Transverse colon (tissue), 4 donors: ENCODE measurements at regions of chr11 and their contacts with region 1.

Region 1: DNA sequence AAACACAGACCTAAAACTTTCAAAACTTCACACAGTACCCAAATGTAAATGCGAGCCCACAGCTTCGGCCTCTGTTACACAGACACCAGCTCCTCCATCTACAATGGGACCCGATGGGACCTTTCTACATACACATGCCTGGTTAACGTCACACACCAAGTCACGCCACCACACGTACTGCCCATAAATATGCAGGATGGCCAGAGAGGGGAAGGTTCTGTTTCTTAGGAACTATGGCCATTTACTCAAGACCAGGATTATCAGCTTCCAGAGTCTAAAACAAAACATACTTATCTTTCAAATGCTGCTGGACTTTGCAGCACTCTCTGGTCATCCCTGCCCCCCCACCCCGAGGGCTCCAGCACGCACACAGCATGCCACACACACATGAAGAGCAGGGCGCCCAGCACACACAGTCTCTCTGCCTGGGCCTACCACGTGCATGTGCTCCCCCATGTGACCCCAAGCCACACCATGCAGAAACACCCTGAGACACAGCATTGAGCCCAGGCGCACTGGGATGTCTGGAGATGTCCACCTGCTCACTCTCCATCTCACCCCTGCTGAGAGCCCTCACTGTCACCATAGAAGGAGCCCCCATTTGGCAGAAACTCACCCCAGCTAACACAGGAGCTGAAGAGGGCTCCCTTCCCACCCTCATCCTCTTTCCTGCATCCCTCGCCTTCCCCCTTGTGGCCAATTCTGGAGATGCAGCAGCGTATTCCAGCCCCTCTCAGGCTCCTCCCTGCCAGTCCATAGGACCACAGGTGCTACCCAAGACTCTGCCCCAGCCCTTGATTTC is 61.8 kb downstream of the SLC22A12 start:
- DNase-seq: peak; percentile 82
- H3K4me3 ChIP-seq: no peak overlapping the region
- H3K27ac ChIP-seq: no peak overlapping the region
- H3K4me1 ChIP-seq: peaks cover 0 to 3% (median 0%) of the 10 kb centered on the region in 4 donors
- H3K27me3 ChIP-seq: no peaks in the 10 kb centered on the region
- CTCF ChIP-seq: peak; percentile 86 to 95 (median 94)
- EP300 ChIP-seq: no peak
- POLR2A ChIP-seq: no peak

Region 2: GRCh38 chr11:64545605-64546004 is 107.2 kb before region 1 on chr11:
- in situ Hi-C with region 1: loop called in 1 of 4 experiments (anchors 10 kb)
- intact Hi-C with region 1: no loop called
- DNase-seq: no peak
- H3K4me3 ChIP-seq: no peak overlapping the region
- H3K27ac ChIP-seq: no peak overlapping the region
- H3K4me1 ChIP-seq: peaks cover 0 to 5% (median 0%) of the 10 kb centered on the region in 4 donors
- H3K27me3 ChIP-seq: no peaks in the 10 kb centered on the region
- CTCF ChIP-seq: no peak
- EP300 ChIP-seq: no peak
- POLR2A ChIP-seq: no peak

Region 3: GRCh38 chr11:64553551-64554201 is 99.1 kb before region 1 on chr11:
- in situ Hi-C with region 1: loop called in 1 of 4 experiments (anchors 10 kb)
- intact Hi-C with region 1: loop called (anchors 1 kb)
- DNase-seq: peak; percentile 59
- H3K4me3 ChIP-seq: no peak overlapping the region
- H3K27ac ChIP-seq: peak overlapping the region; percentile 31 to 72 (median 60)
- H3K4me1 ChIP-seq: peaks cover 7 to 24% (median 22%) of the 10 kb centered on the region in 4 donors
- H3K27me3 ChIP-seq: no peaks in the 10 kb centered on the region
- CTCF ChIP-seq: peak; percentile 94 to 99 (median 97)
- EP300 ChIP-seq: no peak
- POLR2A ChIP-seq: no peak

Region 4: DNA sequence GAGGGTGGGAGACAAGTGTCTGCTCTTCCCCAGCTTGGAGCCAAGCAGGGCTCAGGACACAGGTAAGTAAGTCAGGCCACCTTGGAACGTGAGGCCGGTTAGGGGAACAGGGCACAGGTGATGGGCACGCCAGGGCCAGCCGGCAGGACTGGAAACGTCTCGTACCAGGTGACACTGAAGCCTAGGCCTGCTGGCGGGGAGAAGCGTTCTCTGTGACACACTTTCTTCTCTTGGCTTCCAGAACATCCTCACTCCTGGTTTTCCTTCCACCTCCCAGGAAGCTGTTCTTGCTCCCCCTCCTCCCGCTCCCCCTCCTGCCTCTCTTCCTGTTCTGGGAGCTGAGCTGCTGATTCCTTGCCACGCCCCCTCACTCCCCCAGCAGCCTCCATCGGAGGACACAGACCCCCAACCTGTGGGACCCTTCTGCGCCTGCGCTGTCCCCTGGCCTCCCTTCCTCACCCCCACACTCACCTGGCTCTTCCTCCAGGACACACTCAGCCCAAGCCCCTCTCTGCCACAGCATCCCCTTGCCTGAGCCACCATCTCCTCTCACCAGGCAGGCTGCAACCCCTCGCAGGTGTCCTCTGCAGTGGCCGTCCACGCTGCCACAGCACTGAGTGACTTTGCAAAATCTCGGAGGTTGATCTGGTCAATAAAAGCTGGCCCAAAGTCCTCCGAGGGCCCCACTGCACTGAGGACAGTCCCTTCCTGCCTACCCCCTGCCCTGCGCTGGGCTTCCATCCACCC is 92.9 kb before region 1 on chr11:
- in situ Hi-C with region 1: no loop called
- intact Hi-C with region 1: loop called (anchors 2 kb)
- DNase-seq: peak; percentile 6
- H3K4me3 ChIP-seq: no peak overlapping the region
- H3K27ac ChIP-seq: no peak overlapping the region
- H3K4me1 ChIP-seq: peaks cover 4 to 10% (median 8%) of the 10 kb centered on the region in 4 donors
- H3K27me3 ChIP-seq: no peaks in the 10 kb centered on the region
- CTCF ChIP-seq: no peak
- EP300 ChIP-seq: no peak
- POLR2A ChIP-seq: no peak